ACHN (cell line): ENCODE measurements at regions of chr10 and their contacts with region 1.

Region 1: GRCh38 chr10:99854860-99855259 is 72.4 kb downstream of the ABCC2 start:
- DNase-seq: no peak

Region 2: DNA sequence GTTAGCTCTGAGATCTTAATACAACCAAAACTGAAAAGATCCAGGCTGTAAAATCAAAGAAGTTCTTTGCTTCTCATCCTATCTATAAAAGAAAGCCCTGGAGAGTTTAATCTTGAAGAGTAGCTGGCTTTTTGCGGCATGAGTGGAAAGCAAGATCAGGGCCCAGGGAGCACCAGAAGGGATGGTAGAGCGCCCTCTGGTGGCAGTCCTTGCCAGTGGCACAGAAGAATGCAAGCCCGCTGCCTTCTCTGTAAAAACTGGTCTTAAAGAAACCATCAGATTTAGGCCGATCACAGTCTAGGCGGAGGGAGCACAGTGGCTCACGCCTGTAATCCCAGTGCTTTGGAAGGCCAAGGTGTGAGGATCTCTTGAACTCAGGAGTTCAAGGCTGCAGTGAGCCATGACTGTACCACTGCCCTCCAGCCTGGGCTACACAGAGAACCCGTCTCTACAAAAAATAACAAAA is 191.2 kb after region 1 on chr10:
- in situ Hi-C with region 1: no loop called
- DNase-seq: peak; percentile 78

Region 3: DNA sequence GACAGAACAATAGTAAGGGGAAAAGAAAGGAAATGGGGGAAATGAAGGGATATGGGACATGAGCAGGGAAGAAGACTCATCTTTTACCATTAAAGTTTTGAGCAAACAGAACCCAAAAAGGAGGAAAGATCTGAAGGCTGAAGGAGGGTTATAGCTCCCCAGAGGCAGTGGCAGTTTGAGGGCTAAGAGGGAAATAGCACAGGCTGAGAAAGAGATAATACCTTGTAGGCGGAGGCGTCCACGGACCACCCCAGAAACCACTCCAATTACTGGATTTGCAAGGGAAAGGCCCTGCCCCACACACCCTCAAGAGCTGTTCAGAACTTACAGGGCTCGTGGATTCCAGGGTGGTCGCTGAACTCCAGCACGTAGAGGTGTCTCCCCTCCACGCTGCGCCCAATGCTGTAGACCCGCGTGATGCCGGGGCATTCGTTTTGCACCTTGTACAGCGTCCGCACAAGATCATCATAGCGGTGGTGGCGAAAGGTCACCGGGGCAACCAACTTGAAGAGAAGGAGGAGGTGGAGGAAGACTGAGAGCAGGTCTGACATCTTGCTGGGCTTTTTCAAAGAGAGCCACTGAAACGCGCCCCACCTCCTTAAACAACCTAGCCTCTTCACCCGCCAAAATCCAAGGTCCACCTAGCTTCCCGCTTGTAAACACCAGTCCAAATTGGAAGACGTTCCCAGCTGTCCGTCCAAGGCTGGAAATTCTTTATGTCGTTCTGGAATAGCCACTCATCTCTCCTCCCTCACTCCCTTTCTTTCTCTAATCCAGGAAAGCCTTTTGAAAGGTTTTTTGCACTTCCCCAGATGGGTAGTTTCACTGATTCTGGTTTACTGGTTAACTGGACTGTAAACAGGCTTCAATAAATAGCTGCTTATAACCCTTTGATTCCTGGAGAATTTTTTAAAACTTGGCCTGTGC is 226.5 kb after region 1 on chr10 and contains the start of gene CPN1:
- in situ Hi-C with region 1: loop called (anchors 25 kb)
- DNase-seq: no peak